Activated B cell treated with CpG ODN at 0.5 μM for 24 hours (primary cell): ENCODE measurements at regions of chr2 and their contacts with region 1.

Region 1: GRCh38 chr2:100394111-100394641 is 23.3 kb downstream of the CHST10 start:
- DNase-seq: peak; percentile 63
- ATAC-seq: peak; percentile 77
- H3K4me3 Mint-ChIP-seq: peak overlapping the region; percentile 80
- H3K27ac Mint-ChIP-seq: peak overlapping the region; percentile 97
- H3K4me1 Mint-ChIP-seq: peaks cover 43% of the 10 kb centered on the region
- H3K27me3 Mint-ChIP-seq: no peaks in the 10 kb centered on the region
- CTCF ChIP-seq: no peak

Region 2: GRCh38 chr2:100142393-100142792 is 251.8 kb before region 1 on chr2 and contains the start of gene AFF3:
- CTCF ChIA-PET with region 1: no interaction called
- POLR2A ChIA-PET with region 1: interaction called, 6 read pairs
- intact Hi-C with region 1: loop called (anchors 1 kb)
- DNase-seq: peak; percentile 65
- ATAC-seq: peak; percentile 86
- H3K4me3 Mint-ChIP-seq: peak within 1 kb of the TSS; percentile 99
- H3K27ac Mint-ChIP-seq: peak within 1 kb of the TSS; percentile 99
- H3K4me1 Mint-ChIP-seq: peaks cover 47% of the 10 kb centered on the region
- H3K27me3 Mint-ChIP-seq: no peaks in the 10 kb centered on the region
- CTCF ChIP-seq: no peak
- total RNA-seq, gene AFF3: 228 and 271 TPM in 2 replicates

Region 3: GRCh38 chr2:100262555-100263320 is 131.4 kb before region 1 on chr2:
- CTCF ChIA-PET with region 1: interaction called, 12 read pairs
- POLR2A ChIA-PET with region 1: interaction called, 3 read pairs
- intact Hi-C with region 1: loop called (anchors 5 kb)
- DNase-seq: peak; percentile 51
- ATAC-seq: peak; percentile 76
- H3K4me3 Mint-ChIP-seq: no peak overlapping the region
- H3K27ac Mint-ChIP-seq: no peak overlapping the region
- H3K4me1 Mint-ChIP-seq: peaks cover 8% of the 10 kb centered on the region
- H3K27me3 Mint-ChIP-seq: no peaks in the 10 kb centered on the region
- CTCF ChIP-seq: peak; percentile 92

Region 4: GRCh38 chr2:100416935-100417710 is 22.9 kb after region 1 on chr2 and contains the start of gene CHST10:
- CTCF ChIA-PET with region 1: interaction called, 5 read pairs
- POLR2A ChIA-PET with region 1: interaction called, 13 read pairs
- intact Hi-C with region 1: loop called (anchors 1 kb)
- DNase-seq: peak; percentile 74
- ATAC-seq: peak; percentile 96
- H3K4me3 Mint-ChIP-seq: peak within 1 kb of the TSS; percentile 94
- H3K27ac Mint-ChIP-seq: peak within 1 kb of the TSS; percentile 80
- H3K4me1 Mint-ChIP-seq: peaks cover 18% of the 10 kb centered on the region
- H3K27me3 Mint-ChIP-seq: no peaks in the 10 kb centered on the region
- CTCF ChIP-seq: no peak
- total RNA-seq, gene CHST10: 19.8 and 21.0 TPM in 2 replicates

Region 5: GRCh38 chr2:100580367-100581276 is 186.4 kb after region 1 on chr2:
- CTCF ChIA-PET with region 1: no interaction called
- POLR2A ChIA-PET with region 1: interaction called, 7 read pairs
- intact Hi-C with region 1: loop called (anchors 1 kb)
- DNase-seq: peak; percentile 50
- ATAC-seq: peak; percentile 79
- H3K4me3 Mint-ChIP-seq: peak overlapping the region; percentile 56
- H3K27ac Mint-ChIP-seq: peak overlapping the region; percentile 99
- H3K4me1 Mint-ChIP-seq: peaks cover 22% of the 10 kb centered on the region
- H3K27me3 Mint-ChIP-seq: no peaks in the 10 kb centered on the region
- CTCF ChIP-seq: no peak

Region 6: GRCh38 chr2:101623031-101623521 is 1228.9 kb after region 1 on chr2:
- CTCF ChIA-PET with region 1: no interaction called
- POLR2A ChIA-PET with region 1: no interaction called
- intact Hi-C with region 1: loop called (anchors 10 kb)
- DNase-seq: no peak
- ATAC-seq: peak; percentile 82
- H3K4me3 Mint-ChIP-seq: peak overlapping the region; percentile 69
- H3K27ac Mint-ChIP-seq: peak overlapping the region; percentile 95
- H3K4me1 Mint-ChIP-seq: peaks cover 78% of the 10 kb centered on the region
- H3K27me3 Mint-ChIP-seq: no peaks in the 10 kb centered on the region
- CTCF ChIP-seq: no peak